ENCODE measurements at regions of chr3 and their contacts with region 1.

Region 1: GRCh38 chr3:34807611-34808010 is 831.7 kb upstream of the ARPP21 start:
- DNase-seq: no peak
- CTCF ChIP-seq: no peak

Region 2: GRCh38 chr3:34793057-34793456 is 14.6 kb before region 1 on chr3:
- CTCF ChIA-PET with region 1: interaction called, 10 read pairs
- POLR2A ChIA-PET with region 1: no interaction called
- DNase-seq: no peak
- CTCF ChIP-seq: no peak

Measured in GM10248 (cell line).